Activated CD4-positive, alpha-beta memory T cell treated with anti-CD3 and anti-CD28 coated beads, Interleukin-2, amount 10 ng/mL, durations not matched to agents 7 days and 5 days (primary cell): ENCODE measurements at regions of chr1 and their contacts with region 1.

Region 1: GRCh38 chr1:21189906-21190500 is 13.3 kb upstream of the EIF4G3 start:
- DNase-seq: no peak
- H3K4me3 Mint-ChIP-seq: no peak overlapping the region
- H3K27ac Mint-ChIP-seq: no peak overlapping the region
- H3K4me1 Mint-ChIP-seq: peaks cover 12% of the 10 kb centered on the region
- H3K27me3 Mint-ChIP-seq: peaks cover 24% of the 10 kb centered on the region

Region 2: GRCh38 chr1:20981915-20982314 is 208.1 kb before region 1 on chr1:
- CTCF ChIA-PET with region 1: interaction called, 10 read pairs
- POLR2A ChIA-PET with region 1: no interaction called
- DNase-seq: no peak
- H3K4me3 Mint-ChIP-seq: no peak overlapping the region
- H3K27ac Mint-ChIP-seq: no peak overlapping the region
- H3K4me1 Mint-ChIP-seq: no peaks in the 10 kb centered on the region
- H3K27me3 Mint-ChIP-seq: no peaks in the 10 kb centered on the region

Region 3: DNA sequence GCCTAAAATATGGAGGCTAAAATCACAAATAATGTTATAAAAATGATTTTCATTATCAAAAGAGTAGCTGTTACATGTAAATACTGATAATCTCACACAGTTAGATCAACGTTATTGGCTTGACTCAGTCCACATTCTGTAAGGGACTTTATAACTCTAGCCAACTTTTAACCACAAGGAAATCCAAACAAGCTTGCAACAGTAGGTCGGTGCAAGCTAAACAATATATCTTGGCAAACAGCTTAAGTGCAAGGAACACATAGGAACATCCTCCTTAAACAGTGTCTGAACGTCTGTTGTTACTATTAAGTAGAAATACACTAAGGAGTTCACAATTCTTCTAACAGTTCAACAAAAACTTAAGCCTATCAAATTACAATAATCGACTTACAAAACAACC is 140.0 kb before region 1 on chr1:
- CTCF ChIA-PET with region 1: no interaction called
- POLR2A ChIA-PET with region 1: no interaction called
- DNase-seq: no peak
- H3K4me3 Mint-ChIP-seq: no peak overlapping the region
- H3K27ac Mint-ChIP-seq: no peak overlapping the region
- H3K4me1 Mint-ChIP-seq: no peaks in the 10 kb centered on the region
- H3K27me3 Mint-ChIP-seq: no peaks in the 10 kb centered on the region